ENCODE measurements at regions of chr16 and their contacts with region 1.

Region 1: GRCh38 chr16:58096249-58096648 is 32.9 kb downstream of the CFAP20 start:
- DNase-seq: no peak
- ATAC-seq: no peak
- H3K4me3 ChIP-seq: no peak overlapping the region
- H3K4me3 Mint-ChIP-seq: no peak overlapping the region
- H3K27ac ChIP-seq: no peak overlapping the region
- H3K27ac Mint-ChIP-seq: no peak overlapping the region
- H3K4me1 ChIP-seq: no peaks in the 10 kb centered on the region
- H3K4me1 Mint-ChIP-seq: peaks cover 6% of the 10 kb centered on the region
- H3K27me3 ChIP-seq: no peaks in the 10 kb centered on the region
- H3K27me3 Mint-ChIP-seq: peaks cover 6% of the 10 kb centered on the region
- CTCF ChIP-seq: no peak

Region 2: DNA sequence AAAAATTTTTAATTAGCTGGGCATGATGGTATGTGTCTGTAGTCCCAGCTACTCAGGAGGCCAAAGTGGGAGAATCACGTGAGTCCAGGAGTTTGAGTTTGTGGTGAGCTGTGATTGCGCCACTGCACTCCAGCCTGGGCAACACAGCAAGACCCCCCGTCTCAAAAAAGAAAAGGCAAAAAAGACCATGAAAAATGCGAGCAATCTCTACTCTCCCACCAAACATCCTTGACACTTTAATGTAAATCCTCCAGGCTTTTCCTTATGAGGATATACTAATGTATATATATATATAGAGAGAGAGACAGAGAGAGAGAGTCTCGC is 42.6 kb before region 1 on chr16:
- CTCF ChIA-PET with region 1: no interaction called
- POLR2A ChIA-PET with region 1: no interaction called
- intact Hi-C with region 1: loop called in 1 of 2 experiments (anchors 1 kb)
- DNase-seq: no peak
- ATAC-seq: no peak
- H3K4me3 ChIP-seq: no peak overlapping the region
- H3K4me3 Mint-ChIP-seq: no peak overlapping the region
- H3K27ac ChIP-seq: no peak overlapping the region
- H3K27ac Mint-ChIP-seq: no peak overlapping the region
- H3K4me1 ChIP-seq: no peaks in the 10 kb centered on the region
- H3K4me1 Mint-ChIP-seq: no peaks in the 10 kb centered on the region
- H3K27me3 ChIP-seq: no peaks in the 10 kb centered on the region
- H3K27me3 Mint-ChIP-seq: no peaks in the 10 kb centered on the region
- CTCF ChIP-seq: no peak

Measured in CD8-positive, alpha-beta T cell (primary cell).